H1 (cell line): ENCODE measurements at regions of chr5 and their contacts with region 1.

Region 1: GRCh38 chr5:43556857-43557542 is at the start of gene PAIP1:
- DNase-seq: peak in 1 of 2 experiments; percentile 87
- H3K4me3 ChIP-seq: peak within 1 kb of the TSS; percentile 77 to 99 (median 94)
- H3K27ac ChIP-seq: peak within 1 kb of the TSS; percentile 98
- H3K4me1 ChIP-seq: peaks cover 0 to 4% (median 2%) of the 10 kb centered on the region in 4 experiments; a peak in 3 of 7 replicates
- H3K27me3 ChIP-seq: no peaks in the 10 kb centered on the region
- CTCF ChIP-seq: peak; percentile 30 to 53 (median 33)
- EP300 ChIP-seq: peak in 1 of 2 experiments; percentile 0; a peak in 1 of 3 replicates
- POLR2A ChIP-seq: peak in 1 of 2 experiments; percentile 0; a peak in 2 of 3 replicates
- RAD21 ChIP-seq: peak in 1 of 2 experiments; percentile 20; a peak in 2 of 4 replicates
- total RNA-seq, gene PAIP1: 80.5 and 89.5 TPM in 2 replicates

Region 2: DNA sequence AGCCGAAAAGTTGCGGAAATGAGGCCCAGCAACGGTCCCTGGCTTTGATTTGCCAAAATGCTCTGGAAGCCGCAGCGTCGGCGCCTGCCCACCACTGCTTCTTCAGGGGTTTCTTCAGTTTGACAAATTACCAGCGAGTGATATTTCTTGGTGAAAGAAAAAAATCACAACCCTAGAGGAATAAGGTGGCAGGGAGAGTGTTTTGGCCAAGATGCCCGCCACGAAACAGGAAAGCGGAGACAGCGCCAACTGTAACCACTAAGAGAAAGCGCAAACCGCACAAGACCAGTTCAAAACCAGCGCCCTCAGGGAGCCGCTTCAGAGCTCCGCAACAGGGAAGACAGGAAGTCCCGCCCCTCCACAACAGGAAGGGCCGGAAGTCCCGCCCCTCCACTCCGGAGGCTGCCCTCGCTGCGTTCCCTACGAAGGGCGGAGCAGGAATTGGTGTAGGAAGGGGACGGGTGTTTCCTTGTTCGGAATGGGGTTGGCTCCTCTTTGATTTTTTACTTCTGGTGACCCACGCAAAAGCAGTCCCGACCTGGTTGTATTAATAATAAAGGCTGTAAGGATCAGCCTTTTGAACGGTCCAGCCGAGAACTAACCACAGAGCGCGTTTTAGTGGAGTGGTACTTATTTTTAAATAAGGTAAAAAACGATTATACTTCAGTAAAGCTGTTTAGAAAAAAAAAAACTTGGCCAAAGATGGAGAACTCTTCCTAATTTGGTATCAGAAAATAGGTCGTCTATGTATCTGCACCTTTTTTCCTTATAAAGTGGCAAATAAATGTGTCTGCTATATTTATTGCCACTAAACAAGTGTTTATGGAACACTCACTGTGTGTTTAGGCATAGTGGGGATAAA is 42.0 kb before region 1 on chr5 and contains the start of gene C5orf34:
- CTCF ChIA-PET with region 1: no interaction called
- POLR2A ChIA-PET with region 1: interaction called, 13 read pairs
- DNase-seq: peak; percentile 81 to 96
- H3K4me3 ChIP-seq: peak within 1 kb of the TSS; percentile 77 to 88 (median 86)
- H3K27ac ChIP-seq: peak within 1 kb of the TSS; percentile 92
- H3K4me1 ChIP-seq: peaks cover 0 to 4% (median 0%) of the 10 kb centered on the region in 4 experiments; a peak in 2 of 7 replicates
- H3K27me3 ChIP-seq: no peaks in the 10 kb centered on the region
- CTCF ChIP-seq: no peak
- EP300 ChIP-seq: no peak
- POLR2A ChIP-seq: peak; percentile 89 to 90
- RAD21 ChIP-seq: no peak
- total RNA-seq, gene C5orf34: 8.6 and 11.3 TPM in 2 replicates

Region 3: DNA sequence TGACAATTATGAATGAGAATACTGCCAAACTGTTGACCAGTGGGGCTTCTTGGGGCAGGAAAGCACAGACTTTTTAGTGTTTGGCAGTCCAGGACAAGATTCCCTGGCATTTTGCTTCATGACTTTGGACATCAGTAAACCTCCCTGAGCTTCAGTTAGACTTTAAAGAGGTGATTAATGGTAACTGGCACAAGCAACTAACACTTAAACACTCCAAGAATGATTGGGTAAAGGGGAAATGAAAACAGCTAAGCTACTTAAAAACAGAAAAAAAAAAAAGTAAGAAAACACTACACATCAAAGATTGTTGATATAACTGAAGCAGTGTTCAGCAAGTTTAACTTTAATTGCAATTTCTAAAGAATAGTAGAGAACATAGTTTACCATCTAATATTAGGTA is 13.6 kb before region 1 on chr5:
- CTCF ChIA-PET with region 1: interaction called, 3 read pairs
- POLR2A ChIA-PET with region 1: interaction called, 26 read pairs
- DNase-seq: no peak
- H3K4me3 ChIP-seq: no peak overlapping the region
- H3K27ac ChIP-seq: no peak overlapping the region
- H3K4me1 ChIP-seq: no peaks in the 10 kb centered on the region
- H3K27me3 ChIP-seq: no peaks in the 10 kb centered on the region
- CTCF ChIP-seq: no peak
- EP300 ChIP-seq: no peak
- POLR2A ChIP-seq: no peak
- RAD21 ChIP-seq: no peak

Region 4: DNA sequence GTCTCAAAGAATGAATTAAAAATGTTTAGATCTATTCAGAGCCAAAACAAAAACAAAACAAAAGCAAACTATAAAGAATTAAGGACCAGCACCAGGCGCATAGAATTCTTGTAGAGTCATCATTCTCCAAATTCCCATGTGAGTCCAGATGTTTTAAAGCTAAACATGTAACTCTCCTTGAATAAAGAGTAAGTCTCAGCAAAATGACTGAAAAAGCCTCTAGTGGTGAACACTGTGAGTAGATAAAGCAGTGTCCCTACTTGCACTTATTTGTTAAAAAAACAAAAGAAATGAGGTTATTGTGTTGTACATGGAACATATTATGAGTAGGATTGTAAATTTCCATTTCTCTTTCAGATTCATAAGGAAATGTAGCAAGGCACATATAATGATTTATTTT is 90.0 kb after region 1 on chr5:
- CTCF ChIA-PET with region 1: no interaction called
- POLR2A ChIA-PET with region 1: no interaction called
- DNase-seq: no peak
- H3K4me3 ChIP-seq: no peak overlapping the region
- H3K27ac ChIP-seq: no peak overlapping the region
- H3K4me1 ChIP-seq: no peaks in the 10 kb centered on the region
- H3K27me3 ChIP-seq: no peaks in the 10 kb centered on the region
- CTCF ChIP-seq: no peak
- EP300 ChIP-seq: no peak
- POLR2A ChIP-seq: no peak
- RAD21 ChIP-seq: no peak